Calu3 (cell line): ENCODE measurements at regions of chr18 and their contacts with region 1.

Region 1: DNA sequence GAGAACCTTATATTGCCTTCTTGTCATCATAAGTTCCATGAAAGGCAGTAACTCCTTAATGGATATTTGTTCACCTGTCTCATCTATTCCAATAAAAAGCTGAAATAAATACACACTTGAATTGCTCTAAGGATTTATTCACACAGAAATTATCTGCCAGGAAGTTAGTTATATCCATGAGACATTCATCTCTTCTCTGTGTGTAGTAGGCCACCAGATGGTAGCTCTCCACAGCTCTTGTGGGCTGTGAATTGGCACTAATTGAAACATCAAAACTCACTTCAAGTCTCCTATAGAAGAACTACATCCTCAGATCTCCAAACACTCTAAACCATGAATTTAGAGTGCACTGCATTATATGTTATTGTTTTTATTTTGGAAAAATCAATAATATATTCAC is 189.6 kb downstream of the DSC3 start:
- DNase-seq: no peak
- H3K4me3 Mint-ChIP-seq: no peak overlapping the region
- H3K27ac Mint-ChIP-seq: no peak overlapping the region
- H3K4me1 Mint-ChIP-seq: no peaks in the 10 kb centered on the region
- H3K27me3 Mint-ChIP-seq: no peaks in the 10 kb centered on the region
- CTCF ChIP-seq: no peak

Region 2: DNA sequence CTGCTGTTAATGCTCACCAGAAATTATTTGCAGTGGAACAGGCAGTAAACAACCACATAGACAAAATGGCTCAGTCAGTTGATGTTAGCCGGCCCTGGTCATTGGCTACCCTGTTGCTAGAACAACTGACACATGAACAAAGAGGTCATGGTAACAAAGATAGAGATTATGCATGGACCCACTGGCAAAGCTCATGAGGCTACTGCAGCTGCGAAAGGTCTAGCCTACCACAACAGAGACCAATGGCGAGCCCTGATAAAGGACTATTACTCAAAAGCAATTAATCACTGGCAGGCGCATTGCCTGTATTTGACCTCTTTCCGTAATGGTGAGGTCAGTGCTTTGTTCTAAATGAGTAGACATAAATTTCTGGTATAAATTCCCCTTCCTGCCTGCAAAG is 284.6 kb before region 1 on chr18:
- CTCF ChIA-PET with region 1: no interaction called
- intact Hi-C with region 1: no loop called
- DNase-seq: no peak
- H3K4me3 Mint-ChIP-seq: no peak overlapping the region
- H3K27ac Mint-ChIP-seq: no peak overlapping the region
- H3K4me1 Mint-ChIP-seq: no peaks in the 10 kb centered on the region
- H3K27me3 Mint-ChIP-seq: no peaks in the 10 kb centered on the region
- CTCF ChIP-seq: no peak

Region 3: DNA sequence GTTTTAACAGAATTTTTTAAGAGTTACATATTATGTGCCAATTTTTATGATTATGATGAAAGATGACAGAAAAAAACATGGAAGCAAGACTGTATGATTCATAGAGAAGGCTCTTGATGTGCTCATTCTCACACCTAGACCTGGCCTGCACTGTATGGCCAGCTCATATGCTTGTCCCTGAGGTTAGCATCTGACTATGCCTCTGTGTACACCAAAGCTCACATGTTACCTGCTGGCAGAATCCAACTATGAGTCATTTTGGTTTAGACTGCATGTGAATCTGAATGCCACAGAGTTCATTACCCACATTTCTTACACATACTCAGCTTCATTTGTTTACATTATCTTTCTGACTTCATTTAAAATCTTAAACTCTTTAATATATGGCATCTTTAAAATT is 50.6 kb after region 1 on chr18:
- CTCF ChIA-PET with region 1: no interaction called
- intact Hi-C with region 1: loop called (anchors 10 kb)
- DNase-seq: peak; percentile 52
- H3K4me3 Mint-ChIP-seq: no peak overlapping the region
- H3K27ac Mint-ChIP-seq: peak overlapping the region; percentile 34
- H3K4me1 Mint-ChIP-seq: peaks cover 6% of the 10 kb centered on the region
- H3K27me3 Mint-ChIP-seq: no peaks in the 10 kb centered on the region
- CTCF ChIP-seq: no peak

Region 4: DNA sequence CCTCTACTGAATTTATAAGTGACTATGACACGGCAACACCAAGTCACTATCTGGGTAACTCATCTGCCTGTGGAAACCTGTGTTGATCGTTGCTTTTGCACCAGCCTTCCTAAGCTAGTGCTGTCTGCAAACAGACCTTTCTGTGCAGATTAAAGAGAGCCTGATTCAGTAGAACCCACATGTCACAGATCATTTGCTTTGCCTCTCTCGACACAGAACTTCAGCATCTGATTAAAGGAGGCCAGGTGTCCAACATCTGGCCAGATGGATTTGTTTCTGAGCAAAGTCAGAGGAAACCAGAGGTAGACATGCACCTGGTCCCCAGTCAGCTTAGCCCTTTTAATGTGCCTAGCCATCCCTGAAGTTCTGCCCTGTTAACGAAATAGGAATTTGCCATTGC is 723.7 kb after region 1 on chr18:
- CTCF ChIA-PET with region 1: no interaction called
- intact Hi-C with region 1: no loop called
- DNase-seq: no peak
- H3K4me3 Mint-ChIP-seq: no peak overlapping the region
- H3K27ac Mint-ChIP-seq: no peak overlapping the region
- H3K4me1 Mint-ChIP-seq: no peaks in the 10 kb centered on the region
- H3K27me3 Mint-ChIP-seq: no peaks in the 10 kb centered on the region
- CTCF ChIP-seq: no peak